A549 (cell line): ENCODE measurements at regions of chr1 and their contacts with region 1.

Region 1: DNA sequence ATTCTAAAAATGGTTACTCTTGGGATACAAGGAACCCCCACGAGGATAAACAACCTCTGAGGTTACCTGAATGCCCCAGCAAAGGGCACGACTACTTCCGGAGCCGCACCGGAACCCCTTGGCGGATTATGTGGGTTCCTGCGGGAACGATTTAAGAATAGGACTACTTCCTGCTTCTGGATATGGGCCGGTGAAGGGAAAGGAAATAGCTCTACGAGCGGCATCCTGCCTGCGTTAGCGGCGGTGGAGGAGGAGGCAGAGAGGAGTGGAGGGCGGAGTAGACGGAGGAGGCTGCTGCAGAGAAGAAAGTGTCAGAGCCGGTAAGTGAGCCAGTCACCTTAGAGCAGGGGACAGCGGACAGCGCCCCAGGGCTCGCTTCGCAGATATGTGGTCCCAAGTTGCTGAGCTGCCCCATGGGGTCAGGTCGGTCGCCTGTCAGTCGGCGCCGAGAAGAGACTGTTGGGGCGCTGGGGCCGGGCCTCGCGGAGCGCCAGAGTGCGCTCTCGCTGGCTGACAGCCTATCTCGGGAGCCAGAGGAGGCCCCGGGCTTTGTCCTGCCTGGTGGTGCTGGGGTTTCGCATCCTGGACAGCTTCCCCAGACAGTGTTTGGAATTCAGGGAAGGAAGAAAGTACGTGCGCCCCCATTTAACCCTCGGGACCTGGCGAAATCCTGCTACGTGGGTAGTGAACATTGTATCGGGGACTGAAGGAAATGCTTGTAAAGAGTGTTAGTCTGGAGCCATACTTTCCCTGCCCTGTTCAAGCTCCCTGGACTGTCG is at the start of gene KLHL20:
- DNase-seq: peak; percentile 89 to 93
- ATAC-seq: peak; percentile 99
- H3K4me3 ChIP-seq: peak within 1 kb of the TSS; percentile 63
- H3K27ac ChIP-seq: peak within 1 kb of the TSS; percentile 79 to 96
- H3K4me1 ChIP-seq: peaks cover 20% of the 10 kb centered on the region; the same call in 2 of the 3 replicates
- CTCF ChIP-seq: no peak
- EP300 ChIP-seq: no peak
- POLR2A ChIP-seq: peak; percentile 90
- RAD21 ChIP-seq: 0 out of 5 replicates have a peak, but pooled peaks of 1 of the 2 experiments have one; percentile 2
- polyA plus RNA-seq, gene KLHL20: 15.8 and 16.9 TPM in 2 replicates

Region 2: GRCh38 chr1:173476664-173477285 is 238.2 kb before region 1 on chr1:
- CTCF ChIA-PET with region 1: no interaction called
- POLR2A ChIA-PET with region 1: interaction called, 15 read pairs
- DNase-seq: peak; percentile 91 to 93
- ATAC-seq: peak; percentile 92 to 93
- H3K4me3 ChIP-seq: peak overlapping the region; percentile 90
- H3K27ac ChIP-seq: peak overlapping the region; percentile 91 to 98
- H3K4me1 ChIP-seq: peaks cover 42% of the 10 kb centered on the region
- CTCF ChIP-seq: no peak
- EP300 ChIP-seq: no peak
- POLR2A ChIP-seq: peak; percentile 57
- RAD21 ChIP-seq: no peak

Region 3: GRCh38 chr1:173824331-173825081 is 109.6 kb after region 1 on chr1 and contains the starts of genes CENPL and DARS2:
- CTCF ChIA-PET with region 1: no interaction called
- POLR2A ChIA-PET with region 1: interaction called, 12 read pairs
- DNase-seq: peak; percentile 91 to 98
- ATAC-seq: peak; percentile 96
- H3K4me3 ChIP-seq: peak within 1 kb of the TSS; percentile 74
- H3K27ac ChIP-seq: peak within 1 kb of the TSS; percentile 90 to 92
- H3K4me1 ChIP-seq: peaks cover 16% of the 10 kb centered on the region; the same call in 1 of the 3 replicates
- CTCF ChIP-seq: no peak
- EP300 ChIP-seq: no peak
- POLR2A ChIP-seq: peak; percentile 51
- RAD21 ChIP-seq: no peak
- polyA plus RNA-seq, gene CENPL: 15.6 and 20.2 TPM in 2 replicates
- polyA plus RNA-seq, gene DARS2: 67.0 and 70.4 TPM in 2 replicates